CD8-positive, alpha-beta T cell (primary cell): ENCODE measurements at regions of chr2 and their contacts with region 1.

Region 1: DNA sequence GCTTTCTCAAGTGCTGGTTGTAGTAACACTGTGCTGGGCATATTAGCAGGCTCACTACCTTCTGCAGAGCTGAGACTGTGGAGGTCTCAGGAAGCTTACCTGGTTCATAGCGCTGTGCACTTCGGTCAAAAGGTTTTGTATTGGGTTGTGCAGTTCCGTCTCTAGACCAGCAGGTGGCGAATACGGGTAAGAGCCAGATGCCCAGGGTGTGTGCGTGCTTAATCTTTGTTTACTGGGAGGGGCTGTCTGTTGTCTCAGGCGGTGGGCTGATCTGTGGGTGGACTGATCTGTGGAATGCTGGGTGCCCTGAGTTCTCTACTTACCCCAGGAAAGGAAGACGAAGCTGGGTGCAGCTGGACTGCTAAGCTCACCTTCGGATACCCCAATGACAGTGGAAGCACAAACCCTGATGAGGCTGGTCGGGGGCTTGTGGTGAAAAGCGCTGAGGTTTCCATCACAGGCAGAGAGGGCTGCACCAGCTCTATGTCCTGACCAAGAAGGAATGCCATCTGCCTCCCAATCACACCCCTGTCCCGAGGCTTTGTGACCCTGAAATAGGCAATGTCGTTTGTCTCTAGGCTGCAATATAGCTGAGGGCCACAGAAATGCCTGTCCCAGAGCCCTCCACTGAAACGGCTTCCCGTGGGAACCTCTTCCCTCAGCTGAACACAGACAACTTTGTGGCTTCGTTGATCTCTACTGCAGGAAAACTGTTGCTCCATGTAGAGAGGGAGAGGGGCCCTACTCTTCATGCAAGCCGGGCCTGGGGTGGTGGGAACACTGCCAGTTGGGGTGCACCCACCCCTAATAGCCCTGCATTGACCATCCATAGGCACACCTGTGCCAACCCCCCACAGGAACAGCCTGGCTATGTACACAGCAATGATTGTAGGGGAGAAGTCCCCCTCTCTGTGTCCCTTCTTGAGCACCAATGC is 45.9 kb upstream of the FAM117B start:
- DNase-seq: peak; percentile 41 to 87 (median 68)
- ATAC-seq: peak; percentile 99
- H3K4me3 ChIP-seq: no peak overlapping the region
- H3K4me3 Mint-ChIP-seq: no peak overlapping the region
- H3K27ac ChIP-seq: no peak overlapping the region
- H3K27ac Mint-ChIP-seq: no peak overlapping the region
- H3K4me1 ChIP-seq: peaks cover 4% of the 10 kb centered on the region
- H3K4me1 Mint-ChIP-seq: peaks cover 11% of the 10 kb centered on the region
- H3K27me3 ChIP-seq: no peaks in the 10 kb centered on the region
- H3K27me3 Mint-ChIP-seq: no peaks in the 10 kb centered on the region
- CTCF ChIP-seq: peak; percentile 80

Region 2: DNA sequence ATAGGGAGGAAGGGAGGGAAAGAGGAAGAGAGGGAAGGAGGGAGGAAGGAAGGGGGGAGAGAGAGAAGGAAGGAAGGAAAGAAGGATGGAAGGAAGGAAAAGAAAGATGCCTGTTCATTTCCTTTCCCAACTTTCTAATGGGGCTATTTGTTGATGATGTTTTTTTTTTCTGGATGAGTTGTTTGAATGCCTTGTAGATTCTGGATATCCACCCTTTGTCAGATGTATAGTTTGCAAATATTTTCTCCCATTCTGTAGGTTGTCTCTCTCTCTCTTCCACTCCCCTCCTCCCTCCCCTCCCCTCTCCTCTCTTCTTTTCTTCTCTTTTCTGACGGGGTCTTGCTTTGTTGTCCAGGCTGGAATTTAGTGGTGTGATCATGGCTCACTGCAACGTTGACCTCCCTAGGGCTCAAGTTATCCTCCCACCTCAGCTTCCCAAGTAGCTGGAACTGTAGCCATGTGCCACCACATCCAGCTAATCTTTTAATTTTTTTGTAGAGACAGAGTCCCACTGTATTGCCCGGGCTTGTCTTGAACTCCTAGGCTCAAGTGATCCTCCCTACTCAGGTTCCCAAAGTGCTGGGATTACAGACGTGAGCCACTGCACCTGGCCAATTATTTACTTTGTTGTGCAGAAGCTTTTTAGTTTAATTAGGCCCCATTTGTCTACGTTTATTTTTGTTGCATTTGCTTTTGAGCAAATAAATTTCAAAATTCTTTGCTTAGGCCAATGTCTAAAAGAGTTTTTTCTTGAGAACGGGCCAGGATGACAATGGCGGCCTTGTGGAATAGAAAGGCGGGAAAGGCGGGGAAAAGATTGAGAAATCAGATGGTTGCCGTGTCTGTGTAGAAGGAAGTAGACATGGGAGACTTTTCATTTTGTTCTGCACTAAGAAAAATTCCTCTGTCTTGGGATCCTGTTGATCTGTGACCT is 11.4 kb before region 1 on chr2:
- CTCF ChIA-PET with region 1: interaction called, 21 read pairs
- POLR2A ChIA-PET with region 1: no interaction called
- intact Hi-C with region 1: no loop called
- DNase-seq: no peak
- ATAC-seq: no peak
- H3K4me3 ChIP-seq: no peak overlapping the region
- H3K4me3 Mint-ChIP-seq: no peak overlapping the region
- H3K27ac ChIP-seq: no peak overlapping the region
- H3K27ac Mint-ChIP-seq: no peak overlapping the region
- H3K4me1 ChIP-seq: no peaks in the 10 kb centered on the region
- H3K4me1 Mint-ChIP-seq: no peaks in the 10 kb centered on the region
- H3K27me3 ChIP-seq: no peaks in the 10 kb centered on the region
- H3K27me3 Mint-ChIP-seq: no peaks in the 10 kb centered on the region
- CTCF ChIP-seq: no peak

Region 3: GRCh38 chr2:202703091-202703490 is 114.2 kb after region 1 on chr2:
- CTCF ChIA-PET with region 1: interaction called, 18 read pairs
- POLR2A ChIA-PET with region 1: no interaction called
- intact Hi-C with region 1: loop called (anchors 5 kb)
- DNase-seq: no peak
- ATAC-seq: no peak
- H3K4me3 ChIP-seq: no peak overlapping the region
- H3K4me3 Mint-ChIP-seq: no peak overlapping the region
- H3K27ac ChIP-seq: no peak overlapping the region
- H3K27ac Mint-ChIP-seq: peak overlapping the region; percentile 63
- H3K4me1 ChIP-seq: peaks cover 31% of the 10 kb centered on the region
- H3K4me1 Mint-ChIP-seq: peaks cover 57% of the 10 kb centered on the region
- H3K27me3 ChIP-seq: no peaks in the 10 kb centered on the region
- H3K27me3 Mint-ChIP-seq: no peaks in the 10 kb centered on the region
- CTCF ChIP-seq: no peak

Region 4: GRCh38 chr2:202771741-202772460 is 183.0 kb after region 1 on chr2:
- CTCF ChIA-PET with region 1: interaction called, 14 read pairs
- POLR2A ChIA-PET with region 1: no interaction called
- intact Hi-C with region 1: no loop called
- DNase-seq: no peak
- ATAC-seq: no peak
- H3K4me3 ChIP-seq: no peak overlapping the region
- H3K4me3 Mint-ChIP-seq: no peak overlapping the region
- H3K27ac ChIP-seq: no peak overlapping the region
- H3K27ac Mint-ChIP-seq: no peak overlapping the region
- H3K4me1 ChIP-seq: peaks cover 33% of the 10 kb centered on the region
- H3K4me1 Mint-ChIP-seq: peaks cover 16% of the 10 kb centered on the region
- H3K27me3 ChIP-seq: no peaks in the 10 kb centered on the region
- H3K27me3 Mint-ChIP-seq: no peaks in the 10 kb centered on the region
- CTCF ChIP-seq: no peak

Region 5: DNA sequence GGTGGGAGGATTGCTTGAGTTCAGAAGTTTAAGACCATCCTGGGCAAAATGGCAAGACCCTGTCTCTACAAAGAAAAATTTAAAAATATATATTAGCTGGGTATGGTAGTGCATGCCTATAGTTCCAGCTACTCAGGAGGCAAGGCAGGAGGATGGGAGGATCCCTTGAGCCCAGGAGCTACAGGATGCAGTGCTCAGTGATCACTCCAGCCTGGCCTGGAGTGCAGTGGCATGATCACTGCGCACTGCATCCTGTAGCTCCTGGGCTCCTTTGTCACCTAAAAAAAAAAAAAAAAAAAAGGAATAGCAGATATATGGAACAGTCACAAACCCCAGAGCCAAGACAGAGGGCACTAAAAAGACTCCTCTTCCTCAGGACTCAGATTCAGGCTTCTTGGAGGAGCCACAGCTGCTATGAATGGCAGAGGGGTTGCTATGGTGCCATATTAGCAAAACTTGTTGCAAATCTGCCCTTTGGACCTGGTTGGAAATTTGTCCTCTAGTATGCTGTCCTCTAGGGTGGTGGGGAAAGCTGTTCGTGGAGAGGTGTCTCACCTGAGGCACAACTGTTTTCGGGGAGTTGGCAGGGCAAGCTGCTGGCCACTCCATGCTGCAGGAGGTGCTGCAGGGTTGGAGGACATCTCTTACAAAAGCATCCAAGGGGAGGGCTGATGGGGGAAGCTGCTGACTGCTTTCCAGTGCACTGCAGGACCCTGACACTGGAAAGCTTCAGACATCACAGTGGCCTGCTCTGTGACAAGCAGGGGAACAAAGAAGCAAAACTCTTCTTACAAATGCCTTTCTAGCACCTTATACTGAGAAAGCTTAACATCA is 672.6 kb after region 1 on chr2:
- CTCF ChIA-PET with region 1: no interaction called
- POLR2A ChIA-PET with region 1: no interaction called
- intact Hi-C with region 1: no loop called
- DNase-seq: no peak
- ATAC-seq: no peak
- H3K4me3 ChIP-seq: no peak overlapping the region
- H3K4me3 Mint-ChIP-seq: no peak overlapping the region
- H3K27ac ChIP-seq: no peak overlapping the region
- H3K27ac Mint-ChIP-seq: peak overlapping the region; percentile 75
- H3K4me1 ChIP-seq: no peaks in the 10 kb centered on the region
- H3K4me1 Mint-ChIP-seq: peaks cover 19% of the 10 kb centered on the region
- H3K27me3 ChIP-seq: no peaks in the 10 kb centered on the region
- H3K27me3 Mint-ChIP-seq: no peaks in the 10 kb centered on the region
- CTCF ChIP-seq: no peak

Region 6: GRCh38 chr2:203453858-203454451 is 865.0 kb after region 1 on chr2:
- CTCF ChIA-PET with region 1: no interaction called
- POLR2A ChIA-PET with region 1: no interaction called
- intact Hi-C with region 1: loop called in 1 of 2 experiments (anchors 5 kb)
- DNase-seq: peak in 3 of 9 experiments; percentile 16 to 65 (median 57)
- ATAC-seq: peak; percentile 51
- H3K4me3 ChIP-seq: no peak overlapping the region
- H3K4me3 Mint-ChIP-seq: no peak overlapping the region
- H3K27ac ChIP-seq: no peak overlapping the region
- H3K27ac Mint-ChIP-seq: no peak overlapping the region
- H3K4me1 ChIP-seq: no peaks in the 10 kb centered on the region
- H3K4me1 Mint-ChIP-seq: no peaks in the 10 kb centered on the region
- H3K27me3 ChIP-seq: no peaks in the 10 kb centered on the region
- H3K27me3 Mint-ChIP-seq: no peaks in the 10 kb centered on the region
- CTCF ChIP-seq: peak; percentile 67